Mammary epithelial cell (primary cell): ENCODE measurements at regions of chr6 and their contacts with region 1.

Region 1: DNA sequence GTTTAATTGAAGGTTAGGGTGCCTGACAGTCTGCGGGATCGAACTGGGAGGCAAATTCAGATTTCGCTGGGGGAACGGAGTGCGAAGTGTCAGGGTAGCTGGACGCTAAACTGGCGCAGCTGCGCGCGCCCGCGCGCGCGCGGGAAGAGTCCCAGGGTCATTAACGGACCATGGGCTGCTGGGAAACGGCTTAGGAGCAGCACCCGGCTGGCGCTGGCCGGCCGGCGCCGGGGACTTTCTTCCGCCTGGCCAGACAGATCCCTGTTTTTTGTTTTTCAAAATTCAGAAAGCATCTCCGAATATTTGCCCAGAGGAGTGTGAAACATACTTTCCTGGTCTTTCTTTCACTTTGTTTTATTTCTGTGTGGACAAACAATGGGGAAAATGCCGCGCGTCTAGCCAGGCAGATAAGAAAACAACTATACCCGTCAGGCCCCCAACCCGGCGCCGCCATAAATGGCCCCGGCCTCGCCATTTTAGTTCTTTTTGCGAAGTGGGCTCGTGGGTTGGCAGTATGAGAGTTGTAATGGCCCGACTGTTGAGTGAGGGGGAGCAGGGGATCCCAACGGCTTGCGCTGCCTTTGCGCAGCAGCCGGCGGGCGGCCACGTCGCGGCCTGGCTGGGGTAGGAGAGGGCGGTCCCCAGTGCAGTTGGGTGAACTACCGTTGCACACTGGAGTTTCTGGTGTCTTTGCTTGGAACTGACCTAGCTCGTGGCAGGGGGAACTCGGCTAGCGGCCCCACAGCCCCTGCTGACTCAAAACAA is 7.1 kb downstream of the HSPA1B start:
- DNase-seq: peak; percentile 86
- H3K4me3 ChIP-seq: peak overlapping the region; percentile 73 to 96 (median 82)
- H3K27ac ChIP-seq: peak overlapping the region; percentile 95
- H3K4me1 ChIP-seq: peaks cover 27% of the 10 kb centered on the region
- H3K27me3 ChIP-seq: no peaks in the 10 kb centered on the region
- CTCF ChIP-seq: no peak

Region 2: DNA sequence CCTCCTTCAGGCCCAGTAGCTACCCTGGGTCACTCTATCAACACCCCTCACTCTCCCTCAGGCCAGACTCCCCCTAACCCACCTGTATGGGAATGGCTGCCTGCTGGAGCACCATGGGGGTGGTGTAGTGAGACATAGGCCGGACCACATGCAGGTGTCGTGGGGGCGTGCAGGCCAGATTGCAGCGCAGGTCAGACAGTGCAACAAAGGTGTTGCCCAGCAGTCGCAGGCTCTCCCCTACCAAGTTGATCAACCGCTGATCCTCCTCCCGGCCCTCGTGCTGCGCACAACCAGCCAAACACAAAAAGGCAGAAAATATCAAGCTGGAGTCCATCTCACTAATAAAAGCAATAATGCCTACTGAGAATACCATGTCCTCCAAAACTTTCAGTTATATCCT is 189.3 kb before region 1 on chr6:
- CTCF ChIA-PET with region 1: no interaction called
- dilution Hi-C with region 1: loop called (anchors 5 kb)
- in situ Hi-C with region 1: no loop called
- intact Hi-C with region 1: no loop called
- DNase-seq: no peak
- H3K4me3 ChIP-seq: no peak overlapping the region
- H3K27ac ChIP-seq: no peak overlapping the region
- H3K4me1 ChIP-seq: no peaks in the 10 kb centered on the region
- H3K27me3 ChIP-seq: no peaks in the 10 kb centered on the region
- CTCF ChIP-seq: no peak

Region 3: GRCh38 chr6:31732029-31732428 is 102.6 kb before region 1 on chr6:
- CTCF ChIA-PET with region 1: no interaction called
- dilution Hi-C with region 1: no loop called
- in situ Hi-C with region 1: no loop called
- intact Hi-C with region 1: no loop called
- DNase-seq: no peak
- H3K4me3 ChIP-seq: no peak overlapping the region
- H3K27ac ChIP-seq: no peak overlapping the region
- H3K4me1 ChIP-seq: peaks cover 30% of the 10 kb centered on the region
- H3K27me3 ChIP-seq: no peaks in the 10 kb centered on the region
- CTCF ChIP-seq: no peak

Region 4: GRCh38 chr6:31795616-31796298 is 38.9 kb before region 1 on chr6 and contains the start of gene VARS1:
- CTCF ChIA-PET with region 1: no interaction called
- dilution Hi-C with region 1: no loop called
- in situ Hi-C with region 1: no loop called
- intact Hi-C with region 1: no loop called
- DNase-seq: peak; percentile 84
- H3K4me3 ChIP-seq: peak within 1 kb of the TSS; percentile 54 to 88 (median 82)
- H3K27ac ChIP-seq: peak within 1 kb of the TSS; percentile 87
- H3K4me1 ChIP-seq: peaks cover 33% of the 10 kb centered on the region
- H3K27me3 ChIP-seq: no peaks in the 10 kb centered on the region
- CTCF ChIP-seq: peak; percentile 47 to 87
- total RNA-seq, gene VARS1: 71.8 to 131 TPM

Region 5: DNA sequence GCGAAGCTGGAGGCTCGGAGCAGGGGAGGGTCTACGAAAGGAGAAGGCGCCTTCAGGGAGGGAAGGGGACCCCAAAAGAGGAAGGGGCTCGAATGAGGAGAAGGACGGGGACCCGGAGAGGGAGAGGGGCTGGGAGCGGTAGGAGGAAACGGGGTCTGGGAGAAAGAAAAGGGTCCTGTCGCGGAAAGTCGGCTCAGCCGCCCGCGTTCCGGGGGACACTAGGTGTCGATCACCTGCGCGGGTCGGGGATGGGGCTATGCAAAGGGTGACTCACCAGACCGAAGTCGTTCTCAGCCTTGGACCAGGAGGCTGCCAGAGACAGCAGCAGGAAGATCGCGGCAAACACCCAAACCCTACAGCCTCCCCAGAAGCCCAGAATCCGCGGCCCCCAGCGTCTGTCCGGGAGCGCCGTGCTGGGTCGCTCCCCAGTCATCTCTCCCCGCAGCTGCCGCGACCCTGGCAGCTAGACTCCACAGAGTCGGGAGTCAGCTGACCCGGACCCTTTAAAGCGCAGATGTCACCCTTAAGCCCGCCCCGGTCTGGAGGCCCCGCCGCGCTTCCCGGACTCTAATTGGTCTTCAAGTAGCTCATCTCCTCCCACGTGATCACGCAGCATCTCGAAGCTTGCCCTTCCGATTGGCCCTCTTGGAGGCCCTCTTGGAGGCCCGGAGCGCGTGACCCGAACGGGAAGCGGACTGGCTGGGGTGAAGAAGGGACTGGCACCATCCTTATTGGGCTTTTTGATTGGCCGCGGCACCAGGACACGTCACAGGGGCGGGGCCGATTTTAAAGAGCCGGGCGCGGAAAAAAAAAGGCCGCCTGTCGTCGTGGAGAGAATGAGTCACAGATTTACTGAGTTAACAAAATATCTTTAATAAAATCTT is 28.0 kb after region 1 on chr6 and contains the start of gene NEU1:
- CTCF ChIA-PET with region 1: interaction called, 10 read pairs
- dilution Hi-C with region 1: no loop called
- in situ Hi-C with region 1: no loop called
- intact Hi-C with region 1: loop called (anchors 1 kb)
- DNase-seq: peak; percentile 100
- H3K4me3 ChIP-seq: peak within 1 kb of the TSS; percentile 76 to 94 (median 86)
- H3K27ac ChIP-seq: peak within 1 kb of the TSS; percentile 50
- H3K4me1 ChIP-seq: peaks cover 10% of the 10 kb centered on the region
- H3K27me3 ChIP-seq: no peaks in the 10 kb centered on the region
- CTCF ChIP-seq: no peak
- total RNA-seq, gene NEU1: 27.8 to 42.5 TPM

Region 6: GRCh38 chr6:31888276-31889258 is 54.0 kb after region 1 on chr6:
- CTCF ChIA-PET with region 1: no interaction called
- dilution Hi-C with region 1: loop called (anchors 10 kb)
- in situ Hi-C with region 1: no loop called
- intact Hi-C with region 1: no loop called
- DNase-seq: no peak
- H3K4me3 ChIP-seq: no peak overlapping the region
- H3K27ac ChIP-seq: no peak overlapping the region
- H3K4me1 ChIP-seq: no peaks in the 10 kb centered on the region
- H3K27me3 ChIP-seq: no peaks in the 10 kb centered on the region
- CTCF ChIP-seq: peak; percentile 54 to 67

Region 7: GRCh38 chr6:31945507-31946369 is 111.1 kb after region 1 on chr6 and contains the start of gene CFB:
- CTCF ChIA-PET with region 1: interaction called, 12 read pairs
- dilution Hi-C with region 1: no loop called
- in situ Hi-C with region 1: no loop called
- intact Hi-C with region 1: loop called (anchors 5 kb)
- DNase-seq: peak; percentile 95
- H3K4me3 ChIP-seq: peak within 1 kb of the TSS in 2 of 3 experiments; percentile 4 to 30
- H3K27ac ChIP-seq: peak within 1 kb of the TSS; percentile 65
- H3K4me1 ChIP-seq: peaks cover 19% of the 10 kb centered on the region
- H3K27me3 ChIP-seq: no peaks in the 10 kb centered on the region
- CTCF ChIP-seq: no peak
- total RNA-seq, gene CFB: 1.7 to 7.9 TPM